HEK293 (cell line): ENCODE measurements at regions of chr3 and their contacts with region 1.

Region 1: GRCh38 chr3:172739462-172739861 is 11.1 kb upstream of the ECT2 start:
- H3K4me3 ChIP-seq: no peak overlapping the region
- H3K27ac ChIP-seq: no peak overlapping the region
- H3K4me1 ChIP-seq: no peaks in the 10 kb centered on the region
- CTCF ChIP-seq: no peak

Region 2: DNA sequence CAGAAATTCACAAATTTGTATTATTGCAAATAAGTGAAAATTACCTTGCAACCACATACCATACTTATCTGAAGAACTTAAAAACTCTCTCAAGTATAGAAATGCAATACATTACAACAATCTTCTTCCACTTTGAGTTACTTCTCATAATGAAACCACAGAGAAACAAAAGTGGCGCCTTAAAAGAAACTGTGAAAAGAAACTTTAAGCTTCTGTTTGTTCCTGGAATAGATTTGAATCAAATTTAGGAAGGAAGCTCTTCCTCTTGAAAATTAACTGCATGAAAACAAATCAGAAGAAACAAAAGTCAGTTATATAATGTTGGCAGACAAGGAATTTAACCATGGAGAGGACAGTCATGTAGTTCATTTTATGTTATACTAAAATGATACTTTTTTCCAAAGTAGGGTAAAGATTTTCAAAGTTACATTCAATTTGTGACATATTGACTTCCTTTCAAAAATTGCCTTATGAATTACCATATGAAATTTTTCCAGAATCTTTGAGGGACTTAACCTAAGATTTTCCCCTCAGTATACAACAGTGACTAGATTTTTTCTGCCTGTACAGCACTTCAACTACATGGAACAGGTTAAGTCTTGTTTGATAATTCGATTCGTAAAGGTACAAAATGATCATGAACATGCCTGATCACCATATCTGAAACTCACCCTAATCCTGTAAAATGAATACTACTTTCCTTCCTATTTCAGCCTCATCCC is 158.6 kb before region 1 on chr3:
- CTCF ChIA-PET with region 1: no interaction called
- POLR2A ChIA-PET with region 1: no interaction called
- H3K4me3 ChIP-seq: no peak overlapping the region
- H3K27ac ChIP-seq: no peak overlapping the region
- H3K4me1 ChIP-seq: no peaks in the 10 kb centered on the region
- CTCF ChIP-seq: no peak

Region 3: GRCh38 chr3:173889596-173889995 is 1150.1 kb after region 1 on chr3:
- CTCF ChIA-PET with region 1: no interaction called
- POLR2A ChIA-PET with region 1: interaction called, 10 read pairs
- H3K4me3 ChIP-seq: no peak overlapping the region
- H3K27ac ChIP-seq: no peak overlapping the region
- H3K4me1 ChIP-seq: no peaks in the 10 kb centered on the region
- CTCF ChIP-seq: no peak